ENCODE measurements at regions of chr2 and their contacts with region 1.

Region 1: GRCh38 chr2:143162123-143162837 is 33.1 kb downstream of the ARHGAP15 start:
- H3K4me3 Mint-ChIP-seq: no peak overlapping the region
- H3K27ac Mint-ChIP-seq: no peak overlapping the region
- H3K4me1 Mint-ChIP-seq: peaks cover 37% of the 10 kb centered on the region
- H3K27me3 Mint-ChIP-seq: no peaks in the 10 kb centered on the region

Region 2: GRCh38 chr2:143110758-143111428 is 51.4 kb before region 1 on chr2:
- intact Hi-C with region 1: loop called (anchors 5 kb)
- H3K4me3 Mint-ChIP-seq: no peak overlapping the region
- H3K27ac Mint-ChIP-seq: no peak overlapping the region
- H3K4me1 Mint-ChIP-seq: peaks cover 5% of the 10 kb centered on the region
- H3K27me3 Mint-ChIP-seq: no peaks in the 10 kb centered on the region

Region 3: GRCh38 chr2:143177096-143177786 is 15.0 kb after region 1 on chr2:
- intact Hi-C with region 1: loop called (anchors 1 kb)
- H3K4me3 Mint-ChIP-seq: no peak overlapping the region
- H3K27ac Mint-ChIP-seq: no peak overlapping the region
- H3K4me1 Mint-ChIP-seq: no peaks in the 10 kb centered on the region
- H3K27me3 Mint-ChIP-seq: no peaks in the 10 kb centered on the region

Region 4: GRCh38 chr2:143223556-143223955 is 61.3 kb after region 1 on chr2:
- intact Hi-C with region 1: loop called (anchors 5 kb)
- H3K4me3 Mint-ChIP-seq: no peak overlapping the region
- H3K27ac Mint-ChIP-seq: no peak overlapping the region
- H3K4me1 Mint-ChIP-seq: no peaks in the 10 kb centered on the region
- H3K27me3 Mint-ChIP-seq: no peaks in the 10 kb centered on the region